Right ventricle myocardium inferior (tissue), 1 donor: ENCODE measurements at regions of chr1 and their contacts with region 1.

Region 1: DNA sequence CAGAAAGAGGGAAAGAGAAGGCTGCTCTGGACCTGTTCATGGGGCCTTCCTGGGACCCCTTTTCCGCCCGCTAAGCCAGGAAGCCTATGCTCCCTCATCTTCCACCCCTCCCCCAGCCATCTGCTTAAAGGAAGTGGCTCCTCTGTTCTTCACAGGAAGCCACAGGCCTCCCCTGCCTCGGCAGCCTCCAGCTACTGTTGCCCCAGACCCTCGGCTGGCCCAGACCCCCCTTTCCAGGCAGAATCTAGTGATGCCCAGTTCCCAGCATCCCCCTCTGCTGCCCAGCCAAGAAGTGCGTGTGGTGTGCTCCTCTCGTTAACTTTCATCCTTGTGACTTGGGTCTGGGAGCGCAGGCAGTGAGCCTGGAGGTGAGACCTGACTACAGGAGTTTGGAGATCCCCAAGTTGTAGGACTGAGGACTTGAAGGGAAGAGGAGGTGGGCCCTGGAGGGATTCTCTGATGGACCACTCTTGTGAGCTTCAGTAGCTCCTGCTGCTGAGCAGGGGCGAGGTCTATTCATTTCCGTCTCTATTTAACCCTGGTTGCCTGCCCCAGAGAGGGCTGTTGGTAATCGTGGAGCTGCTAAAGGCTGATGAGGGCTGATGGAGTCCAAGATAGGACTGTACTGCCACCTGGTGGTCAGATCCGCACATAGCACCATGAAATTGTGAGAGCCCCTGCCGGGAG is 9.1 kb downstream of the IFI6 start:
- DNase-seq: peak; percentile 80
- ATAC-seq: peak; percentile 72

Region 2: DNA sequence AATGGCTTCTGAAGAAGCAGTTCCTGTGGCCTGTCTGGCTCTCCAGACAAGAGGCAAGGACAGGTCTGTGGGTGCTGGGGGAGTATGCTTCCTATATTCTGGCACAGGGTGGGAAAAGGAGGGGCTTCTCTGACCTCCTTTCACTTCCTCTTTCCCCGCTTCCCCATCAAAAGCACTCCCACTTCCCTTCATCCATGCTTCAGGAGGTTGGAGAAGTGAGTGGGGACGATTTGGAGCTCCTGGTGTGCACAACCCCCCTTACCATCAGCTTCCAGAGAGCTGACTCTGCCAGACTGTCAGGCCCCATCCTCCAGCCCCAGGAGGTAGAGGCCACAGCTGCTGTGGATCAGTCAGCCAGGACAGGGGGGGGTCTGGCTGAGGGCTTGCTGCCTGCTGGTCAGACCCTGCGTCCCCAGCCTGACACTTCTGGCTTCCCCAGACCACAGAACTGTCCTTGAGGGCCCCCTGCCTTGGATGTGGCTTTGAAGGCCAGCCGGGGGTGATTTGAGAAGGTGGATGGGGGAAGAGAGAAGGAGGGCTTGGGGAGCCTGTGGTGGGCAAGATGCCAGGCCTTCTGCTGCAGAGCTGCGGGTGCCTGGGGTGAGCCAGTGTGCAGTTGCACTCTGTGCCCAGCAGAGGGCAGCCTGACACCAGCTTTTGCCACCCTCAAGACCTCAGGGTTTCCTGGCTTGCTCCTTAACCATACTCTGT is 362.4 kb before region 1 on chr1:
- intact Hi-C with region 1: loop called (anchors 5 kb)
- DNase-seq: peak; percentile 92
- ATAC-seq: peak; percentile 85

Region 3: DNA sequence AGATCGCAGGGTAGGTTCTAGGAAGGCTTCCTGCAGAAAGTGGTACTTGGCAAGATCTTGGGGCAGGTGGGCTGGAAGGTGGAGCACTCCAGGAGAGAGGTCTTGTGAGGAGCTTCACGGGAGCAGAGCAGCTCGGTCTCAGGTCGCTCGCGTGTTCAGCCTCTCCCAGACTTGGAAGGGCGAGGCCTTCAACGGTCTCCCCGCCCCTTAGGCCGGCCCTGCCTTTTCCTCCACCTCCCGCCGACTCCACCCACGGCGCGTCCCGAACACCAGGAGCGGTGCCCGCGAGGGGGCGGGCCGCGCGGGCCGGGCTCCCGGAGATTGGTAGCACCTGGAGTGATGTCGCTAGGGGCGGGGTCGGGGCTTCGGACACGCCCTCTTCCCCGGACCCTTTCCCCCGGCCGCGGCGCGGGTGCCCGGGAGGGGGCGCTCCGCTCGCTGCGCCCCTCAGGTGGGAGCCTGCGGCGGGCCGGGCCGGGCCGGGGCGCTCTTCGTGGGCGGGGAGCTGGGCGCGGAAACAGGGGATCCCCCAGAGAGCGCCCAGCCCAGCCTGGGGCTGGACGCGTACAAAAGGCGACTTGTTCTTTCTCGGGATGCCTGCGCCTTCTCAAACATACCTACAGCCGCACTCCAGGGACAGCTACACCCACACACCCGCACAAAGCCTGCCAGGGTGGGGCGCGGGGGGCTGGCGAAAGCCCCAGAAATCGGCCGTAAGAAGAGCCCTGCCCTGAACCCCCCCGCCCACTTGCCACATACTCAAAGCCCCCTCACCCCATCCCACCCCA is 94.4 kb before region 1 on chr1:
- intact Hi-C with region 1: no loop called
- DNase-seq: peak; percentile 98
- ATAC-seq: peak; percentile 84

Region 4: DNA sequence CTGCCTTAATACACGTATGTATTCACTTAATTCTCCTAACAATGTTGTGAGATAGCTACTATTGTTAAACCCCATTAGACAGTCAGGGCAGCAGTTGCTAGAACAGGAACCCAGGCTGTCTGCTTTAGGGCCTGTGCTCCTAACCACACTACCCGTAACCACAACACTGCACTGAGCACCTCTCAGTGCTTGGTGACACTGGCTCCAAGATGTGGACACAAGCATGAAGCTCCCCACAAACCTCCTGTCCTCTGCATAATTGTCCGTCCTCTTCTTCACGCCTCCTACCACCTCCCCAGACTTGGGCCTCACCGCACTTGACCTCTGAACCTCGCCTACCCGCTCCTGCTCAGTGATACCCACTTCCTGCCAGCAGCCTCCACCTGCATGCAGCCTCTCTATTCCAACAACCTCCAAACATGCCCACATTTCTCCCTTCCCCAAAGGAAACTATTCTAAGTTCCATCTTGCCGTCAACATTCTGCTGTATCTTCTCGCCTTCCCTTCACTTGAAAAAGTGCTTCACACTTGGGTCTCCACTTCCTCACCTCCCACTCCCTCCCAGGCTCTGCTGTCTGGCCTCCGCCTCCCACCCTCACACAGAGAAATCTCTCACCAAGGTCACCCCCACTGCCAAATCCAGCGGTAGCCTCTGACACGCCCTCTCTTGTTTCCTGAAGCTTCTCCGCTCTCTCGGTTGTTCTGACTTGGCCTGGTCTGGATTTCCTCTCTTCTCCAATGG is 44.3 kb before region 1 on chr1:
- intact Hi-C with region 1: no loop called
- DNase-seq: no peak
- ATAC-seq: no peak

Region 5: GRCh38 chr1:27632387-27633297 is 30.2 kb before region 1 on chr1:
- intact Hi-C with region 1: loop called (anchors 2 kb)
- DNase-seq: no peak
- ATAC-seq: no peak

Region 6: DNA sequence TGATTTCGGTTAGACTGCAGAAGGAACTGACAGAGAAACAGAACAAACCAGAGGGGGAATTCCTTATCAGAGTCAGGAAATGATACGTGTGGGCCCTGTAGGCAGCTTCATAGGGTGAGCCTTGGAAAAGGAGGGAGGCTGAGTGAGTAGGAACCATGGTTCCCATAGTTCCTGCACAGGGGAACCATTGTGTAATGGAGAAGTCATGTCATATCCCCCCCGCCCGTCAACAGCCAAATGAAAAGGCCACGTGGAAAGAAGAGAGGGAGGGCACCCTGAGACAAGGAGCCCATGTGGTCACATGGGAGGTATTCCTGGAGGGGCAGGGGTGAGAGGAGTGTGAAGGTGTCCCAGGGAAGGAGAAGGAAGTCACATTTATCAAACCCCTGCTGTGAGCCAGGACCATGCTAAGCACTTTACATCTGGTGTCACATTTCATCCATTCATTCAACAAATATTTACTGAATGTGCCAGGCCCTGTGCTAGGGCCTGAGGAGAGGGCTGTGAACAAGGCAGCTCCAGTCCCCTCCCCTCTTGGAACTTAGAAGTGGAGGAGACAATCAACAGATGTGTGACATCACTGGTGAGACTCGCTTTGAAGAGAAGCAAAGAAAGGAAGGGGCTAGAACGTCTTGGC is 12.2 kb before region 1 on chr1:
- intact Hi-C with region 1: loop called (anchors 2 kb)
- DNase-seq: no peak
- ATAC-seq: peak; percentile 29